ENCODE measurements at regions of chr1 and their contacts with region 1.

Region 1: DNA sequence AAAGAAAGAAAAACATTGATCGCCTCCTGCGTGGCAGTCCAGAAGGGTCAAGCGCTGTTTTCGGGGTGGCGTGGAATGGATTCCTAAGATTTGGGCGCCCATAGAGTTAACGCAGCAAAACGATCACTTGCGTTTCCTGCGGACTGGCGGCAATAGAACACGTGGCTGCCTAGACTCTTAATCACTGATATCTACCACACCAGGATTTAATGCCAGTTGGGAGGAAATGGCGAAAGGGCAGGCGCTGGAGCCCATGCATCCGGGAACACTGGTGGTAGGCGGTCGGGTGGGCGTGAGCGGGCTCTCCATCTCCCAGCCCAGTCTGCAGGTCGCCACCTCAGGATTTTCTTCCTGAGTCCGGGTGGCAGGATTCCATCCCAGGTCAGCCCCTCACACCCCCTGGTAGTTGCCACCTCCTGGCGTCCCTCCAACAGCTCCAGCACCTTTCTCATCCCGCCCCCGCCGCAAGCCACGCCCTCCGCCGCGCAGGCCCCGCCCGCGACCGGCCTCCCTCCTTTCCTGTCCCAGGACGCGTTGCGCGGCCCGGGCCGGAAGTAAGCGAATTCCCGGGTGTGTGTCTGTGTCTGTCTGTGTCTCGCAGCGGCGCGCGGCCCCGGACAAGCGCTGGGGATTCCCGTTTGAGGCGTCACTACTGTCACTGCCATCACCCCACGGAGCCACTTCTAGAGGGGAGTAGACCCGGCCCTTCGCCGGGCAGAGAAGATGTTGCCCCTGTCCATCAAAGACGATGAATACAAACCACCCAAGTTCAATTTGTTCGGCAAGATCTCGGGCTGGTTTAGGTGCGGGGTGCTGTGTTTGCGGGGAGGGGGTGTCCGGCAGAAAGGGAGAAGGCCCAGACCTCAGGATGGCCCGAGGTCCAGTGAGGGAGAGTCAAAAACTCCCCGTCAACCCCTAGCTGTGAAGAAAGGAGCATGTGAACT is at the start of gene SLC30A7:
- DNase-seq: peak; percentile 99
- total RNA-seq, gene SLC30A7: 27.5 to 29.7 TPM

Region 2: GRCh38 chr1:100132566-100133477 is 763.0 kb before region 1 on chr1 and contains the starts of genes SASS6 and TRMT13:
- intact Hi-C with region 1: loop called in 1 of 2 experiments (anchors 10 kb)
- DNase-seq: peak; percentile 99
- total RNA-seq, gene SASS6: 2.3 to 2.9 TPM
- total RNA-seq, gene TRMT13: 12.6 to 17.7 TPM

Region 3: DNA sequence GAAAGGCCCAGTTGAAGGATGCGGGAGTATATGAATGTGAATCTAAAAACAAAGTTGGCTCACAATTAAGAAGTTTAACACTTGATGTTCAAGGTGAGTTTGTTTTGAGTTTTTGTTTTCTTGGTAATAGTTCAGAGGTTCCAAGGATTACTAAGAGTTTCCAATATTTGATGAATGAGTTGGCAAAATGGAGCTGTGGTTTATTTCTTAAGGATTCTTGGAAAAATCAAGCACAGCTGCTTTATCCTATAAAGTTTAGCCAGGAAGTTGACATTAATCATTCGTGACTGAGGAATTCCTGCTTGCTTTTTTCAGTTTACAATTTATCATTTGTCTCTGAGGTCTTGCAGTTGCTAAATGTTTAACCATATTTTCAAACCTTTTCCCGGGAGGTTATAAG is 161.1 kb before region 1 on chr1:
- intact Hi-C with region 1: no loop called
- DNase-seq: no peak

Region 4: GRCh38 chr1:100941098-100941527 is 45.3 kb after region 1 on chr1:
- intact Hi-C with region 1: no loop called
- DNase-seq: no peak